ENCODE measurements at regions of chr7 and their contacts with region 1.

Region 1: GRCh38 chr7:78510580-78511188 is 712.1 kb downstream of the PHTF2 start:
- DNase-seq: peak; percentile 23
- ATAC-seq: peak; percentile 72
- H3K4me3 ChIP-seq: no peak overlapping the region
- H3K27ac ChIP-seq: no peak overlapping the region
- H3K4me1 ChIP-seq: no peaks in the 10 kb centered on the region
- H3K27me3 ChIP-seq: no peaks in the 10 kb centered on the region
- CTCF ChIP-seq: peak; percentile 61
- EP300 ChIP-seq: no peak
- POLR2A ChIP-seq: no peak
- RAD21 ChIP-seq: no peak

Region 2: DNA sequence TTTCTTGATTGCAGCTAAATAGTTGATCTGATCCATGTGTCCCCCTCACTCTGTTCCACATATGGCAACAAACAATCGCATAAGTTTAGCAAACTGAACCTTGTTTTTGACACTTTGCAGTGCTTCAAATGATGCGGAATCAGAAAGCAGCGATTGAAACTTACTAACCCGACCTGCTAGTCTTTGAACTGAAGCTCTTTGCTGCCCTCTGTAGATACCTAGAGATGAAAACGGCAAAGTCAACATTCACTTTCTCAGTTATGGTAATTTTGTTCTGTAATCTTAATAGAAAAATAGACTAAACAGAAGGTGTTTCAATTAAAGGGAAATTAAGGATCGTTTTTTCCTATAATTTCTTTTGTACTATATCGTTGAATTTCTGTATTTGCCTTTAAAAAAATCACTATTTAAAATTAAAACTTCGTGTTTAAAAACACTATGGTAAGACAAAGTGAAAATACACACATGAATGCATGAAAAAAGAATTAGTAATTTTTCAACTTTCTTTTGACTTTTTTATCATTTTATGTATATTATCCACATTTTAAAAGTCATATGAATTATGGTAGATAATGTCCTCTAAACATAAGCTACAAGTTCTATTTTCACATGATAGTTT is 666.3 kb after region 1 on chr7:
- CTCF ChIA-PET with region 1: no interaction called
- POLR2A ChIA-PET with region 1: no interaction called
- in situ Hi-C with region 1: no loop called
- intact Hi-C with region 1: loop called (anchors 2 kb)
- DNase-seq: peak; percentile 10
- ATAC-seq: no peak
- H3K4me3 ChIP-seq: no peak overlapping the region
- H3K27ac ChIP-seq: no peak overlapping the region
- H3K4me1 ChIP-seq: no peaks in the 10 kb centered on the region
- H3K27me3 ChIP-seq: no peaks in the 10 kb centered on the region
- CTCF ChIP-seq: peak; percentile 63
- EP300 ChIP-seq: no peak
- POLR2A ChIP-seq: no peak
- RAD21 ChIP-seq: no peak

Measured in HepG2 (cell line).